ENCODE measurements at regions of chr12 and their contacts with region 1.

Region 1: DNA sequence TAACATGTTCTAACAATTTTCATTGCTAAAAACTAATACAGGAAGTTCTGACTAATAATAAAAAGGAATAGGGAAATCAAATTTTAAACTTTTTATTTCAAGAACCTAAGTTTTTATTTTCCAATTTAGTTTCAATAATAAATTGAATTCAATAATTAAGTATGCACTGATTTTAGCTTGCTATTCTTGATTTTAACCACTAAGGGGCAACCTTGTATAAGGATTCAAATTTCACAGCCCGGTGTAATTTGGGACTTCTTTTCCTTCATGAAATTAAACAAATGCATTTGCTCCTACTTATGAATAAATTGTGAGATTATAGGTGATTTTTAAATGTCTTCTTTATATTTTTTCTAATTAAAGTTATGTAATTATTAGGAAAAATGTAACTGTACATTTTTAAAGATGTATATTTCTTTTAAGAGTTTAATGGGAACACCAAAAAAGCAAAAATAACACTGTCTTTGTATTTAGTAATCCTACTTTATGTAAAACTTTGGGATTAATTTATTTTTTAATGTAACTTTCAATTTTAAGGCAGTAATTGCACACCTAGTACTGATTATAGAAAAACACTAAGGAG is 241.4 kb upstream of the PDZRN4 start:
- DNase-seq: peak; percentile 42
- ATAC-seq: peak; percentile 57; the same call in 1 of the 2 replicates
- H3K4me3 ChIP-seq: no peak overlapping the region
- H3K27ac ChIP-seq: no peak overlapping the region
- H3K4me1 ChIP-seq: no peaks in the 10 kb centered on the region
- H3K27me3 ChIP-seq: no peaks in the 10 kb centered on the region
- CTCF ChIP-seq: peak; percentile 69
- POLR2A ChIP-seq: no peak
- RAD21 ChIP-seq: peak; percentile 73

Region 2: DNA sequence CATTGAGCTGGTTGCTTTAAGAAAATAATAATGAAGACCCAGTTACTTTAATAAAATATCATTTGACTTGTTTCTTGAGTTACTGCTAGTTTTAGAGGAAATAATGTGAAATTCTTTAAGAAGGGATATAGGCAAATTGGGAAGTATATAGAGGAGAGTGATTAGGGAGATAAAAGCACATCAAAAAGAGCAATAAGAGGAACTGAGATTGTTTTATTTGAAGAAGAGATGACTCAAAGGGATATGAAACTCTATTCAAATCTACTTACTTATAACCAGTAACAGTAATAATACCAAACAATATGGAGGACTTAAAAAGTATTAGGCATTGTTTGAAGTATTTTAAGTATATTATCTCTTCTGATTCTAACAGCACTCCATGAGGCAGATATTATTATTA is 684.8 kb before region 1 on chr12:
- CTCF ChIA-PET with region 1: no interaction called
- POLR2A ChIA-PET with region 1: no interaction called
- dilution Hi-C with region 1: no loop called
- in situ Hi-C with region 1: no loop called
- intact Hi-C with region 1: no loop called
- DNase-seq: no peak
- ATAC-seq: no peak
- H3K4me3 ChIP-seq: no peak overlapping the region
- H3K27ac ChIP-seq: no peak overlapping the region
- H3K4me1 ChIP-seq: no peaks in the 10 kb centered on the region; the same call in 1 of the 2 replicates
- H3K27me3 ChIP-seq: no peaks in the 10 kb centered on the region
- CTCF ChIP-seq: no peak
- POLR2A ChIP-seq: no peak
- RAD21 ChIP-seq: no peak

Region 3: GRCh38 chr12:40889329-40889728 is 57.4 kb before region 1 on chr12:
- CTCF ChIA-PET with region 1: no interaction called
- POLR2A ChIA-PET with region 1: no interaction called
- dilution Hi-C with region 1: no loop called
- in situ Hi-C with region 1: no loop called
- intact Hi-C with region 1: no loop called
- DNase-seq: no peak
- ATAC-seq: no peak
- H3K4me3 ChIP-seq: no peak overlapping the region
- H3K27ac ChIP-seq: no peak overlapping the region
- H3K4me1 ChIP-seq: no peaks in the 10 kb centered on the region
- H3K27me3 ChIP-seq: no peaks in the 10 kb centered on the region
- CTCF ChIP-seq: no peak
- POLR2A ChIP-seq: no peak
- RAD21 ChIP-seq: no peak

Region 4: DNA sequence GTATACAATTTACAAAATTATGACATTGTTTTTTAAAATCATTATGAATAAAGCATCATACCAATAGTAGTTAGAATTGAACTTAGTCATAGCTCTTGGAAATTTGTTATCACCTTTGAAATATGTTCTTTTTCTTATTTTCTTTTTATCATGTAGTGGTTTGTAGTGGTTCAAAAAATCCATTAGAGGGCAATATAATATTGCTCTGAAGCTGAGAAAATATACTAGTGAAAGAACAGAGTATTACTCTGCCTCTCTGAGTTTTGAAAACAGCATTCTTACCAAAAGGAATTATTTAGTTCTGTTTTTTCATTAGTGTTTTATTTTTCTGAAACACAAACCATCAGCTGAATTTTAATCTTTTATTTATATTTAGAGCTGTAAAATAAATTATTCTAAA is 317.6 kb after region 1 on chr12:
- CTCF ChIA-PET with region 1: no interaction called
- POLR2A ChIA-PET with region 1: no interaction called
- dilution Hi-C with region 1: no loop called
- in situ Hi-C with region 1: no loop called
- intact Hi-C with region 1: loop called (anchors 1 kb)
- DNase-seq: no peak
- ATAC-seq: peak; percentile 53; the same call in 1 of the 2 replicates
- H3K4me3 ChIP-seq: no peak overlapping the region
- H3K27ac ChIP-seq: no peak overlapping the region
- H3K4me1 ChIP-seq: no peaks in the 10 kb centered on the region
- H3K27me3 ChIP-seq: no peaks in the 10 kb centered on the region; the same call in 1 of the 2 replicates
- CTCF ChIP-seq: peak; percentile 45
- POLR2A ChIP-seq: no peak
- RAD21 ChIP-seq: peak; percentile 36; the same call in 1 of the 2 replicates

Region 5: DNA sequence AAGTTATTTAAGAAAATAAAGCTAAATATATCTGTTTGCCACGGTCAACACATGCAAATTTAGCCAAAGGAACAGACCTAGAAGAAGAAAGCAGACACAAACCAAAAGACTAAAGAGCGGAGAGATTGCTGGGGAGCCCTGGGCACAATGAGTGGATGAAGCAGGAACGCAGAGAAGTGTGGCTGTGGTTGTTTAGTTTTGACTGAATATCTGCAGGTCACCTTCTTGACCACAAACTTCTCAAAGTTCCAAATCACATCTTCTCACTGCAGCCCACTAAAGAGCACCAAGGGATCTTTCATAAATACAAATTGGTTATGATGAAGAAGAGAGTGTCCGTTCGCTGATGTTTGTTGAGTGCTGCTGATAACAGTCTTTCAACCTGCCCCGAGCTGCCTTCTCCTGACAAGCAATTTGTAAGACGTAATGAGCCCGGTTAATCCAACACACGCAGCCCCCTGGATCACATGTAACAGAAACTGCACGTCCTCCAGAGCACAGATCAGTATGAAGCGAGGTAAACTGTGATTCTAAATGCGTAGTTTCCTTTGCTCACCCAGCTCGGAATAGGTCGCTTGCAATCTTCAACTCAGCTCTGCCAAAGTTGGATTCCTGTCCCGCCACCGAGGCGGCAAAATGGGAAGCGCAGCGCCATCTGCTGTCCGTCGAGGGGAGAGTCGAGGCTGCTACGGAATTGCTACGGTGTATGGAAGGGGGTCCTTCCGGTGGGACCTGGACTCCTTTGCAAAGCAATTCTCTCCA is 1077.2 kb after region 1 on chr12:
- CTCF ChIA-PET with region 1: interaction called, 5 read pairs
- POLR2A ChIA-PET with region 1: no interaction called
- dilution Hi-C with region 1: no loop called
- in situ Hi-C with region 1: loop called (anchors 10 kb)
- intact Hi-C with region 1: loop called (anchors 1 kb)
- DNase-seq: peak; percentile 64
- ATAC-seq: peak; percentile 99
- H3K4me3 ChIP-seq: peak overlapping the region; percentile 49
- H3K27ac ChIP-seq: no peak overlapping the region
- H3K4me1 ChIP-seq: no peaks in the 10 kb centered on the region
- H3K27me3 ChIP-seq: peaks cover 2% of the 10 kb centered on the region; the same call in 1 of the 2 replicates
- CTCF ChIP-seq: peak; percentile 87
- POLR2A ChIP-seq: no peak
- RAD21 ChIP-seq: peak; percentile 76

Region 6: DNA sequence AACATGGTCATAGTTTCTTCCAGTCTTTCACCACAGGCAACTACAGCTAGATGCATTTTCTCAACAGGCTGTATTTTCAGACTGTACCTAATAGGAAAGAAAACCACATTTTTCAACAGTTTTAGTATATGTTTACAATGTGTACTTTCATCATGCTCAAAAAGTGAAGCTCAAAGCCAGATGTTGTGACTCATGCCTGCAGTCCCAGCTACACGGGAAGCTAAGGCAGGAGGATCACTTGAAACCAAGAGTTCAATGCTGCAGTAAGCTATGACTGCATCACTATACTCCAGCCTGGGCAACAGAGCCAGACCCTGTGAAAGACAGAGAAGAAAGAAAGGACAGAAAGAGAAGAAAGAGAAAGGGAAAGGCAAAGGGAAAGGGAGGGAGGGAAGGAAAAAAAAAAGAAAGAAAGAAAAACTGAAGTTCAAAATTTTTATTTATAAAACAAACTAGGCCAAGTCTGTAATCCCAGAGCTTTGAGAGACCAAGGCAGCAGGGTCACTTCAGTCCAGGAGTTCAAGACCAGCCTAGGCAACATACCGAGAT is 1172.5 kb after region 1 on chr12:
- CTCF ChIA-PET with region 1: no interaction called
- POLR2A ChIA-PET with region 1: no interaction called
- dilution Hi-C with region 1: no loop called
- in situ Hi-C with region 1: no loop called
- intact Hi-C with region 1: loop called (anchors 5 kb)
- DNase-seq: peak; percentile 97
- ATAC-seq: peak; percentile 96
- H3K4me3 ChIP-seq: no peak overlapping the region
- H3K27ac ChIP-seq: no peak overlapping the region
- H3K4me1 ChIP-seq: peaks cover 3% of the 10 kb centered on the region; the same call in 1 of the 2 replicates
- H3K27me3 ChIP-seq: no peaks in the 10 kb centered on the region
- CTCF ChIP-seq: no peak
- POLR2A ChIP-seq: no peak
- RAD21 ChIP-seq: no peak

Region 7: GRCh38 chr12:42332301-42333285 is 1385.9 kb after region 1 on chr12:
- CTCF ChIA-PET with region 1: no interaction called
- POLR2A ChIA-PET with region 1: no interaction called
- dilution Hi-C with region 1: no loop called
- in situ Hi-C with region 1: no loop called
- intact Hi-C with region 1: loop called (anchors 1 kb)
- DNase-seq: peak; percentile 51
- ATAC-seq: peak; percentile 85
- H3K4me3 ChIP-seq: no peak overlapping the region
- H3K27ac ChIP-seq: no peak overlapping the region
- H3K4me1 ChIP-seq: 0 out of 2 replicates have a peak, but pooled peaks cover 1% of the 10 kb centered on the region
- H3K27me3 ChIP-seq: no peaks in the 10 kb centered on the region
- CTCF ChIP-seq: peak; percentile 63
- POLR2A ChIP-seq: no peak
- RAD21 ChIP-seq: peak; percentile 66

Measured in IMR-90 (cell line).